MCF 10A (cell line): ENCODE measurements at regions of chr1 and their contacts with region 1.

Region 1: DNA sequence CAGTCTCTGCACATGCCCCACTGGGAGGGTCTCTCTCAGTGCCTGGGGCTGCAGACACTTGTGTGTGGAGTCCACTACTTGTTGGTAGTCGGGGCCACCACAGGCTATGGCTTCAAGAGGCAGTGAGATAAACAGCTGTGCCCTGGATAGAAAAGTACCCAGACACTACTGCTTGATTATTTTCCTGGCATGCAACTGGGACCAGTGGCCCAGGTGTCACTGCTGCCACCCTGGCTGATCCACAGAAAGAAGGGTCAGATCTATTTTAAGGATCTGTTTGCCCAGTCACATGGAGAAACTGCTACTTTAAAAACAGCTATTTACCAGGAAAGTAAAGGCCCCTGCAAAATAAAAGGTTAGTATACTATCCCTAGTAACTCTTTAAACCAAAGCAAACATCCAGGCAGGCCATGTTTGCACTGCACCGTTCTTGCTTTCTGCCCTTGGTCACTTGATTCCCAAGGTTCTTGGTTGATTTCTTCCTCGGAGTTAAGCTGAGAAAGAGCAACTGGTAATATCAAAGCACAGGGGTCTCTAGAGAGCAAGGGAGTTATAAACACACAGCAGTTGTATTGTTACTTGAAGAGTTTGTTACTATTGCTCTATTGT is 99.9 kb downstream of the GLUL start:
- DNase-seq: no peak
- H3K4me3 Mint-ChIP-seq: no peak overlapping the region
- H3K27ac Mint-ChIP-seq: peak overlapping the region; percentile 36
- H3K4me1 Mint-ChIP-seq: peaks cover 31% of the 10 kb centered on the region
- H3K27me3 Mint-ChIP-seq: no peaks in the 10 kb centered on the region
- CTCF ChIP-seq: no peak

Region 2: DNA sequence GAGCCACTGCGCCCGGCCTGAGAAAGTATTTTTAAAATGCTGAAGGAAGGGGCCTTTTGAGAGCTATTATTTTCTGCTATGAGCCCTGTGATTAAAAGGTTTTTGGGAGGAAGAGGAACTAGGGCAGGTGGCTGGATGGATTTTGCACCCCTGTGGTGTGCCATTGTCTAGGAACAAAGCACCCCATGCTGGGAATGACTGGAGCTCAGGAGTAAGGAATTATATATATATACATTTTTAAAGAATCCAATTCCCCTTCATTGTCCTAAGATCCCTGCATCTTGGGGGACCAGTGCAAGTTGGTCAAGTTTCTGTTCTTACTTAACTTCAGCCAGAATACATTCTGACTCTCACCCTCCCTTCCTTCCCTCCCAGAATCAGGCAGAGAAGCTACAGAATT is 321.8 kb before region 1 on chr1:
- CTCF ChIA-PET with region 1: no interaction called
- POLR2A ChIA-PET with region 1: no interaction called
- intact Hi-C with region 1: no loop called
- DNase-seq: no peak
- H3K4me3 Mint-ChIP-seq: no peak overlapping the region
- H3K27ac Mint-ChIP-seq: no peak overlapping the region
- H3K4me1 Mint-ChIP-seq: no peaks in the 10 kb centered on the region
- H3K27me3 Mint-ChIP-seq: peaks cover 16% of the 10 kb centered on the region
- CTCF ChIP-seq: no peak

Region 3: DNA sequence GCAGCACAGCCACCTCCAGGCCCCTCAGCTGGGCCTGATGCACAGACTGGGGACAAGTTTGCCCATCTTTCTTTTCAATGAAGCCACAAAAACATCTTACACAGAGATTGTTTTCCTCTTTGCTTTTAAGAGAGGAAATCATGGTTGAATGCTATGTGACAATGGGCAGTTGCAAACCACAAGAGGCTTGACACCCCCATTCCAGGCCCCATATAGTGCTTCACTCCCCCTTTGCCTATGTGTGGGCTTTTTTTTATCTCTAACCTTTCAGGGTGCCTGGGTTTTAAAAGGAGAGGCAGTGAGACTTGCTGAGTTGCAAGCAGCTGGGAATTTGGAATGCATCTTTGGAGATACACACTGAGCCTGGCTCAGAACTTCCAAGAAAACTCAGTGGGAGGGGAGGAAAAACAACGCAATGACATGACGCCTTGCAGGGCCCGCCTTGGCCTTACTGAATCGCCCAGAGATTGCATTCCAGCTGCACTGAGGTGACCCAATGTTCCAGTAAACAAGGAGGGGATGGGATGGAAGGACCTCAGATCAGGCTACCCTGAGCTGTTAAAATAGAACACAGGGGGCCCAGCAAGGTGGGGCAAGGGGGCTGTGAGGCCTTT is 85.0 kb before region 1 on chr1:
- CTCF ChIA-PET with region 1: interaction called, 8 read pairs
- POLR2A ChIA-PET with region 1: interaction called, 10 read pairs
- intact Hi-C with region 1: no loop called
- DNase-seq: no peak
- H3K4me3 Mint-ChIP-seq: no peak overlapping the region
- H3K27ac Mint-ChIP-seq: no peak overlapping the region
- H3K4me1 Mint-ChIP-seq: peaks cover 5% of the 10 kb centered on the region
- H3K27me3 Mint-ChIP-seq: no peaks in the 10 kb centered on the region
- CTCF ChIP-seq: no peak

Region 4: DNA sequence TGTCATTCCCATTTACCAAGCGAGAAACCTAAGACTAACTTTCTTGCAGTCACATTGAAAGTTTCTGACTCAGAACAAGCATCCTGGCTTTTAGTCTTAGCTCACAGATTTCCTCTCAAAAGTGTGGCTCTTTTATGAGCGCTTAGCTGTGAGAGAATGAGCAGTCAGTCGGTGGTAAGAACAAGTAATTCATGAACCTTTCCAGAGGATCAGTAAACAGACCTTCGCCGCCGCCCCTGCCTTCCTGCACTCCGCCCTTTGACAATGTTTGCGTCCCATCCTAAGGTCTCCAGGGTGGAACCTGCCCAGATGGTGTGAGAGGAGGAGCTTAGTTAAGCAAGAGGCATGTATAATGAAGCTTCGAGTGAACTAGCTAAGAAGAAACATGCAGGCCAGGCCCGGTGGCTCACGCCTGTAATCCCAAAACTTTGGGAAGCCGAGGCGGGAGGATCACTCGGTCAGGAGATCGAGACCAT is 42.4 kb before region 1 on chr1:
- CTCF ChIA-PET with region 1: interaction called, 3 read pairs
- POLR2A ChIA-PET with region 1: interaction called, 19 read pairs
- intact Hi-C with region 1: no loop called
- DNase-seq: no peak
- H3K4me3 Mint-ChIP-seq: no peak overlapping the region
- H3K27ac Mint-ChIP-seq: no peak overlapping the region
- H3K4me1 Mint-ChIP-seq: peaks cover 5% of the 10 kb centered on the region
- H3K27me3 Mint-ChIP-seq: no peaks in the 10 kb centered on the region
- CTCF ChIP-seq: no peak

Region 5: GRCh38 chr1:182381962-182382819 is 90.5 kb after region 1 on chr1:
- CTCF ChIA-PET with region 1: interaction called, 5 read pairs
- POLR2A ChIA-PET with region 1: interaction called, 71 read pairs
- intact Hi-C with region 1: no loop called
- DNase-seq: no peak
- H3K4me3 Mint-ChIP-seq: no peak overlapping the region
- H3K27ac Mint-ChIP-seq: peak overlapping the region; percentile 78
- H3K4me1 Mint-ChIP-seq: peaks cover 39% of the 10 kb centered on the region
- H3K27me3 Mint-ChIP-seq: no peaks in the 10 kb centered on the region
- CTCF ChIP-seq: no peak